CD4-positive, alpha-beta T cell (primary cell): ENCODE measurements at regions of chrX and their contacts with region 1.

Region 1: DNA sequence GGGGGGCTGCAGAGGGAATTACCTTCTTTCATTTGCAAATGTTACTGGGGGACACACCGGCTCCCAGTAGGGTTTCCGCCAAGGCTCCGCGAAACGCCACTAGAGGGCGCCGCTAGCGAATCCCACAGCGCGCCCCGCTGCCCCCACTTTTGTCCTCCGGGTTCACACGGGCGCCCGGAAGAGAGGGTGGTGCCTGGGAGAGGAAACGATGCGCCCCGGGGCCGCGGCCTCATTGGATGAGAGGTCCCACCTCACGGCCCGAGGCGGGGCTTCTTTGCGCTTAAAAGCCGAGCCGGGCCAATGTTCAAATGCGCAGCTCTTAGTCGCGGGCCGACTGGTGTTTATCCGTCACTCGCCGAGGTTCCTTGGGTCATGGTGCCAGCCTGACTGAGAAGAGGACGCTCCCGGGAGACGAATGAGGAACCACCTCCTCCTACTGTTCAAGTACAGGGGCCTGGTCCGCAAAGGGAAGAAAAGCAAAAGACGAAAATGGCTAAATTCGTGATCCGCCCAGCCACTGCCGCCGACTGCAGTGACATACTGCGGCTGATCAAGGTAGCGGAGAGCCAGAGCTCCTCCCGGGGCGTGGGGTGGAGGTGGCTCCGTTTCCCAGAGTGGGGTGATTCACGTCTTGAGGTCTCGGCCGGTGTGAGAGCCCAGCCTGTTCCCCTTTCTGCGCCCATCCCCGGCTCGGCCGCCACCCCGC is at the start of gene SAT1:
- DNase-seq: peak; percentile 84 to 96 (median 91)
- ATAC-seq: peak; percentile 88
- H3K4me3 ChIP-seq: peak within 1 kb of the TSS; percentile 91
- H3K4me3 Mint-ChIP-seq: peak within 1 kb of the TSS; percentile 98
- H3K27ac ChIP-seq: peak within 1 kb of the TSS; percentile 74 to 90
- H3K27ac Mint-ChIP-seq: peak within 1 kb of the TSS; percentile 97
- H3K4me1 ChIP-seq: peaks cover 19% of the 10 kb centered on the region
- H3K4me1 Mint-ChIP-seq: peaks cover 44% of the 10 kb centered on the region
- H3K27me3 ChIP-seq: no peaks in the 10 kb centered on the region
- H3K27me3 Mint-ChIP-seq: no peaks in the 10 kb centered on the region
- CTCF ChIP-seq: peak; percentile 65
- total RNA-seq, gene SAT1: 305 to 312 TPM

Region 2: DNA sequence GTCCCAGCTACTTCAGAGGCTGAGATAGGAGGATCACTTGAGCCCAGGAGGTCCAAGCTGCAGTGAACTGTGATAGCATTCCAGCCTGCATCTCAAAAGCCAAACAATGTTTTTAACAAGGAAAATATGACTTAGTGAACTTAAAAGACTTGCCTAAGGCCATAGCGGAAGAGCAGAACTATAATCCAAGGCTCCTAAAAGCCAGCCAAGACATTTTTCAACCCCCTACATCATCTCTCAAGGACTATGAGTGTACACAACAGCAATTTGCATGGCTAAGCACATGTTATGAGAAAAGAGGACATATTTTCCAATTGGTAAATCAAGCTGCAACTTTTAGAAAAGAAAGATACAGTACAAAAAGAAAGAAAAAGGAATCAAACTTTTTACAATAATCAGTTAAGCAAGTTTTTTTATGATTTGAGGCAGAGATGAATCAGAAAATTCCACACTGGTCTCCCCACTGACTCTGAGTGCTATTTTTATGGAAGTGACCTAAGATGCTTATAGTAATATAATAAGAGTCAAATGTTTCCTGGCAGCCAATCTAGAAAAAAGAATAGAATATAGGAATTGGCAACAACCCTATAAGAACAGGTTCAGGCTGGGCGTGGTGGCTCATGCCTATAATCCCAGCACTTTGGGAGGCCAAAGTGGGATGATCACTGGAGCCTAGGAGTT is 30.1 kb before region 1 on chrX:
- CTCF ChIA-PET with region 1: no interaction called
- POLR2A ChIA-PET with region 1: no interaction called
- intact Hi-C with region 1: no loop called
- DNase-seq: no peak
- ATAC-seq: no peak
- H3K4me3 ChIP-seq: no peak overlapping the region
- H3K4me3 Mint-ChIP-seq: no peak overlapping the region
- H3K27ac ChIP-seq: no peak overlapping the region
- H3K27ac Mint-ChIP-seq: no peak overlapping the region
- H3K4me1 ChIP-seq: peaks cover 3% of the 10 kb centered on the region
- H3K4me1 Mint-ChIP-seq: peaks cover 4% of the 10 kb centered on the region
- H3K27me3 ChIP-seq: no peaks in the 10 kb centered on the region
- H3K27me3 Mint-ChIP-seq: no peaks in the 10 kb centered on the region
- CTCF ChIP-seq: no peak

Region 3: DNA sequence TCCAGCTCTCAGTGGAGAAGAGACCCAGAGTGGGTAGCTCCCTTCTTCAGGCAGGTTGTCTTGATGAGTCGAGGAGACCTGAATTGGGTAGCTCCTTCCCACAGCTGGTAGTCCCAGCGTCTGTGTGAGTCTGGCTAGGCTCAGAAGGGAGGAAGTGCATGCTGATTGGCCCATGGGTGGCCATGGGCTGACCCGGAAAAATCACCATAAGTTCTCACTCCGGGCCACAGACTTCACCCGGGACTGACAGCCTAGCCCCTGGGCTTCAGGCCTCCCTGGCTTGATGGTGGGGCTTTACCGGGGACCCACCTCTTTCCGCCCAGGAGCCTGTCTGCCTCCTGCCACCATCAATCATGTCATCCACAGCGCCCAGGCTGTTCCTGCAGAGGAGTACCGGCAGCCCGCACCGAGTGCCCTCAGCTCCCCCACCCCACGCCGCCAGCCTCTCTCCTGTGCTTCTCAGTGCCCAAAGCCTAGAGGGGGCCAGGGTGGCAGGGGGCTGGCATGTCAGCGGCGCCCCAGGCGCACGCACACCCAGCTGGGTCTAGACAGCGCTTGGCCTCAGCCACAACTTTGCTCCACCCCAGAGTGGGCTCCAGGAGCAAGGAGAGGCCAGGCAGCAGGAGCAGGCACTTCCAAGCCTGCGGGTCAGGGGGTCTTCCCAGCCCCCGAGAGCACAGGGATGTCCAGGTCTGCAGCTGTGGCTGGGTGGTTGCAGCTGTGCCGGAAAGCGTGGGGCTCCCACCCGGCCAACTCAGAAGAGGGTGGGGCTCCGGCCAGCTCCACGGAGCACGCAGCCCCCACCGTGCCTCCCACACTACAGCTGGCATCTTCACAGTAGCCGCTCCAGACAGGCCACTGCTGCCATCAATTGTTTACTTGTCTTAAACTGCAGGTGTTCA is 16.1 kb before region 1 on chrX:
- CTCF ChIA-PET with region 1: no interaction called
- POLR2A ChIA-PET with region 1: interaction called, 51 read pairs
- intact Hi-C with region 1: no loop called
- DNase-seq: peak in 4 of 14 experiments; percentile 11 to 41 (median 26)
- ATAC-seq: peak; percentile 88
- H3K4me3 ChIP-seq: peak overlapping the region; percentile 49
- H3K4me3 Mint-ChIP-seq: peak overlapping the region; percentile 84
- H3K27ac ChIP-seq: no peak overlapping the region
- H3K27ac Mint-ChIP-seq: peak overlapping the region; percentile 76
- H3K4me1 ChIP-seq: no peaks in the 10 kb centered on the region
- H3K4me1 Mint-ChIP-seq: peaks cover 5% of the 10 kb centered on the region
- H3K27me3 ChIP-seq: no peaks in the 10 kb centered on the region
- H3K27me3 Mint-ChIP-seq: no peaks in the 10 kb centered on the region
- CTCF ChIP-seq: no peak

Region 4: GRCh38 chrX:23907498-23908218 is 124.6 kb after region 1 on chrX and contains the starts of genes APOO and CXorf58:
- CTCF ChIA-PET with region 1: interaction called, 10 read pairs
- POLR2A ChIA-PET with region 1: interaction called, 21 read pairs
- intact Hi-C with region 1: loop called (anchors 2 to 5 kb)
- DNase-seq: peak; percentile 78 to 97 (median 89)
- ATAC-seq: peak; percentile 92
- H3K4me3 ChIP-seq: peak within 1 kb of the TSS; percentile 61
- H3K4me3 Mint-ChIP-seq: peak within 1 kb of the TSS; percentile 92
- H3K27ac ChIP-seq: peak within 1 kb of the TSS; percentile 75 to 84
- H3K27ac Mint-ChIP-seq: peak within 1 kb of the TSS; percentile 96
- H3K4me1 ChIP-seq: peaks cover 13% of the 10 kb centered on the region
- H3K4me1 Mint-ChIP-seq: peaks cover 15% of the 10 kb centered on the region
- H3K27me3 ChIP-seq: no peaks in the 10 kb centered on the region
- H3K27me3 Mint-ChIP-seq: no peaks in the 10 kb centered on the region
- CTCF ChIP-seq: peak; percentile 53
- total RNA-seq, gene APOO: 3.3 to 4.9 TPM
- total RNA-seq, gene CXorf58: not detected

Region 5: GRCh38 chrX:24150051-24150790 is 367.2 kb after region 1 on chrX:
- CTCF ChIA-PET with region 1: no interaction called
- POLR2A ChIA-PET with region 1: no interaction called
- intact Hi-C with region 1: loop called in 1 of 2 experiments (anchors 10 kb)
- DNase-seq: peak; percentile 64 to 94 (median 83)
- ATAC-seq: peak; percentile 74
- H3K4me3 ChIP-seq: peak overlapping the region; percentile 74
- H3K4me3 Mint-ChIP-seq: peak overlapping the region; percentile 94
- H3K27ac ChIP-seq: peak overlapping the region; percentile 79 to 80
- H3K27ac Mint-ChIP-seq: peak overlapping the region; percentile 90
- H3K4me1 ChIP-seq: peaks cover 33% of the 10 kb centered on the region
- H3K4me1 Mint-ChIP-seq: peaks cover 73% of the 10 kb centered on the region
- H3K27me3 ChIP-seq: no peaks in the 10 kb centered on the region
- H3K27me3 Mint-ChIP-seq: no peaks in the 10 kb centered on the region
- CTCF ChIP-seq: peak; percentile 43